Activated CD4-positive, alpha-beta T cell treated with anti-CD3 and anti-CD28 coated beads, Interleukin-2, amount 10 ng/mL, durations not matched to agents 7 days and 5 days (primary cell): ENCODE measurements at regions of chr20 and their contacts with region 1.

Region 1: GRCh38 chr20:34516247-34517113 is at the start of gene DYNLRB1:
- DNase-seq: peak; percentile 97
- H3K4me3 Mint-ChIP-seq: peak within 1 kb of the TSS; percentile 97
- H3K27ac Mint-ChIP-seq: peak within 1 kb of the TSS; percentile 94
- H3K4me1 Mint-ChIP-seq: peaks cover 30% of the 10 kb centered on the region
- H3K27me3 Mint-ChIP-seq: no peaks in the 10 kb centered on the region
- total RNA-seq, gene DYNLRB1: 90.5 to 105 TPM

Region 2: GRCh38 chr20:34538671-34539123 is 22.2 kb after region 1 on chr20:
- CTCF ChIA-PET with region 1: interaction called, 10 read pairs
- POLR2A ChIA-PET with region 1: no interaction called
- DNase-seq: peak; percentile 61
- H3K4me3 Mint-ChIP-seq: no peak overlapping the region
- H3K27ac Mint-ChIP-seq: no peak overlapping the region
- H3K4me1 Mint-ChIP-seq: peaks cover 7% of the 10 kb centered on the region
- H3K27me3 Mint-ChIP-seq: no peaks in the 10 kb centered on the region